HepG2 (cell line): ENCODE measurements at regions of chr1 and their contacts with region 1.

Region 1: GRCh38 chr1:75785983-75786853 is at the start of gene RABGGTB:
- DNase-seq: peak; percentile 93
- ATAC-seq: peak; percentile 95
- H3K4me3 ChIP-seq: peak within 1 kb of the TSS; percentile 81 to 98 (median 94)
- H3K27ac ChIP-seq: peak within 1 kb of the TSS; percentile 89
- H3K4me1 ChIP-seq: peaks cover 35% of the 10 kb centered on the region
- H3K27me3 ChIP-seq: no peaks in the 10 kb centered on the region; a peak in 1 of 5 replicates
- CTCF ChIP-seq: no peak
- EP300 ChIP-seq: peak; percentile 24 to 33; a peak in 1 of 4 replicates
- POLR2A ChIP-seq: peak; percentile 100
- RAD21 ChIP-seq: peak; percentile 39; the same call in 1 of the 2 replicates
- total RNA-seq, gene RABGGTB: 269 and 290 TPM in 2 replicates

Region 2: GRCh38 chr1:75265792-75266191 is 520.4 kb before region 1 on chr1:
- CTCF ChIA-PET with region 1: no interaction called
- POLR2A ChIA-PET with region 1: interaction called, 3 read pairs
- in situ Hi-C with region 1: no loop called
- intact Hi-C with region 1: loop called (anchors 5 kb)
- DNase-seq: peak; percentile 67
- ATAC-seq: peak; percentile 84
- H3K4me3 ChIP-seq: no peak overlapping the region
- H3K27ac ChIP-seq: no peak overlapping the region
- H3K4me1 ChIP-seq: peaks cover 31% of the 10 kb centered on the region
- H3K27me3 ChIP-seq: no peaks in the 10 kb centered on the region
- CTCF ChIP-seq: peak; percentile 71
- EP300 ChIP-seq: no peak; a peak in 1 of 4 replicates
- POLR2A ChIP-seq: no peak
- RAD21 ChIP-seq: peak; percentile 32; the same call in 1 of the 2 replicates

Region 3: DNA sequence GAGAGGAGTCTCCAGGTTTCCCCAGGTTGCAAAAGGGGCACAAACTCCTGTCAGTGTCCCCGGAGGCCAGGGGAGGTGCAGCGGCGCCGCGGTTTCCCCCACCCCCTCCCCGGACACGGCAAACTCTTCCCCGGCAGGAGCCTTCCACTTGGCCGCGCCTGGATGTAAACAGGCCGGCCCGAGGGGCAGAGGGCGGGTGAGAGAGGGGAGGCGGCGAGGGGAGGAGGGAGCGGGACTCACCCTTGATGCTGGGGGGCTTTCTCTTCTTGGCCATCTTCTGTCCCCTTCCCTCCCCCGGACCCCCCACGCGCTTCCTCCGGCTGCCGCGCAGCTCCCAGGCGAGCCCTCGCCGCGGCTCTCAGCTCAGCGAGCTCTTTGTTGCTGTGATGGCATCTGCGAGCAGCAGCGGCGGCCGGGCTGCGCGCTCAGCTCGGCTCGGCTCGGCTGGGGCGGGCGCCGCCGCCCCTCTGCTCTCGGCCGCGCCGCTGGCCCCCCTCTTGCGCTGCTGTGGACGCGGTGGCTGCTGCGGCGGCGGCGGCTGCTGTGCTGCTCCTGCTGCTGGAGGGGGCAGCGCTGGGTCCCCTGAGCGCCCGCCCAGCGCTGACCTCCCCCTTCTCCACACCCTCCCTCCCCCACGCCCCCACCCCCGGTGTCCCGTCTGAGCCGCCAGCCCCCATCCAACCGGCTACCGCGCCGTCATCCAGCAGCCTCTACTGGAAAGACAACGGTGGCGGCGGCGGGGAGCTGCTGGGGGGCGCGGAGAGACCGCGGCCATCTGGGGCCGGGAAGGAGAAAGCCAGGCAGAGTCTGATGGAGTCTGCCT is 170.4 kb before region 1 on chr1:
- CTCF ChIA-PET with region 1: no interaction called
- POLR2A ChIA-PET with region 1: interaction called, 3 read pairs
- in situ Hi-C with region 1: no loop called
- intact Hi-C with region 1: loop called (anchors 2 kb)
- DNase-seq: no peak
- ATAC-seq: peak; percentile 82
- H3K4me3 ChIP-seq: peak overlapping the region; percentile 69 to 81 (median 78)
- H3K27ac ChIP-seq: no peak overlapping the region
- H3K4me1 ChIP-seq: peaks cover 13% of the 10 kb centered on the region
- H3K27me3 ChIP-seq: peaks cover 0 to 2% of the 10 kb centered on the region in 2 experiments; a peak in 1 of 5 replicates
- CTCF ChIP-seq: no peak
- EP300 ChIP-seq: no peak
- POLR2A ChIP-seq: no peak
- RAD21 ChIP-seq: no peak

Region 4: GRCh38 chr1:75724472-75725022 is 61.7 kb before region 1 on chr1 and contains the start of gene ACADM:
- CTCF ChIA-PET with region 1: no interaction called
- POLR2A ChIA-PET with region 1: interaction called, 21 read pairs
- in situ Hi-C with region 1: loop called (anchors 5 kb)
- intact Hi-C with region 1: loop called (anchors 1 kb)
- DNase-seq: peak; percentile 88
- ATAC-seq: peak; percentile 94
- H3K4me3 ChIP-seq: peak within 1 kb of the TSS; percentile 86 to 98 (median 95)
- H3K27ac ChIP-seq: peak within 1 kb of the TSS; percentile 91
- H3K4me1 ChIP-seq: peaks cover 42% of the 10 kb centered on the region
- H3K27me3 ChIP-seq: no peaks in the 10 kb centered on the region
- CTCF ChIP-seq: 0 out of 2 replicates have a peak, but pooled peaks have one; percentile 13
- EP300 ChIP-seq: no peak; a peak in 2 of 4 replicates
- POLR2A ChIP-seq: peak; percentile 79 to 96
- RAD21 ChIP-seq: no peak
- total RNA-seq, gene ACADM: 92.2 and 133 TPM in 2 replicates

Region 5: DNA sequence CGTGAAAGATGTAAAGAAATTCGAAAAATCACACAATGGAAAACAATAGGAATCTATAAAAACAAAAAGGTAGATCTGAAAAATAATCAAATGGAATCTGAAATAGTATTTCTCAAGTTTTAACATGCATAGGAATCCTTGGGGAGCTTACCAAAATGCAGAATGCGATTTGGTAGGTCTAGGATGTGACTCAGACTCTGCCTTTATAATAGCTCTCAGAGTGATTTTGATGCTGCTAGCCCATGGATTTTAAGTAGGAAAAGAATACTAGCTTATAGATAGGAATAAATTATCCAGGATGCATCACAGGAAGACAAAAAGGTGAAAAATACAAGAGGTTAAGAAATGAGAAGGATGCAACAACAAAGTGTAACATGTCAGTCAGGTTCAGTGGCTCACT is 14.2 kb before region 1 on chr1:
- CTCF ChIA-PET with region 1: no interaction called
- POLR2A ChIA-PET with region 1: interaction called, 19 read pairs
- in situ Hi-C with region 1: no loop called
- intact Hi-C with region 1: no loop called
- DNase-seq: no peak
- ATAC-seq: no peak
- H3K4me3 ChIP-seq: no peak overlapping the region
- H3K27ac ChIP-seq: no peak overlapping the region
- H3K4me1 ChIP-seq: no peaks in the 10 kb centered on the region
- H3K27me3 ChIP-seq: no peaks in the 10 kb centered on the region
- CTCF ChIP-seq: no peak
- EP300 ChIP-seq: no peak
- POLR2A ChIP-seq: no peak
- RAD21 ChIP-seq: no peak

Region 6: GRCh38 chr1:75796376-75797272 is 10.4 kb after region 1 on chr1 and contains the start of gene MSH4:
- CTCF ChIA-PET with region 1: no interaction called
- POLR2A ChIA-PET with region 1: interaction called, 54 read pairs
- in situ Hi-C with region 1: no loop called
- intact Hi-C with region 1: no loop called
- DNase-seq: peak; percentile 33
- ATAC-seq: peak; percentile 38
- H3K4me3 ChIP-seq: no peak within 1 kb of the TSS
- H3K27ac ChIP-seq: no peak within 1 kb of the TSS
- H3K4me1 ChIP-seq: peaks cover 26% of the 10 kb centered on the region
- H3K27me3 ChIP-seq: no peaks in the 10 kb centered on the region
- CTCF ChIP-seq: no peak
- EP300 ChIP-seq: no peak
- POLR2A ChIP-seq: peak; percentile 52 to 72; a peak in 3 of 4 replicates
- RAD21 ChIP-seq: peak; percentile 44
- total RNA-seq, gene MSH4: 0.09 TPM in 1 of 2 replicates, not detected in the other